Aorta (tissue), 5 donors: ENCODE measurements at regions of chr5 and their contacts with region 1.

Region 1: DNA sequence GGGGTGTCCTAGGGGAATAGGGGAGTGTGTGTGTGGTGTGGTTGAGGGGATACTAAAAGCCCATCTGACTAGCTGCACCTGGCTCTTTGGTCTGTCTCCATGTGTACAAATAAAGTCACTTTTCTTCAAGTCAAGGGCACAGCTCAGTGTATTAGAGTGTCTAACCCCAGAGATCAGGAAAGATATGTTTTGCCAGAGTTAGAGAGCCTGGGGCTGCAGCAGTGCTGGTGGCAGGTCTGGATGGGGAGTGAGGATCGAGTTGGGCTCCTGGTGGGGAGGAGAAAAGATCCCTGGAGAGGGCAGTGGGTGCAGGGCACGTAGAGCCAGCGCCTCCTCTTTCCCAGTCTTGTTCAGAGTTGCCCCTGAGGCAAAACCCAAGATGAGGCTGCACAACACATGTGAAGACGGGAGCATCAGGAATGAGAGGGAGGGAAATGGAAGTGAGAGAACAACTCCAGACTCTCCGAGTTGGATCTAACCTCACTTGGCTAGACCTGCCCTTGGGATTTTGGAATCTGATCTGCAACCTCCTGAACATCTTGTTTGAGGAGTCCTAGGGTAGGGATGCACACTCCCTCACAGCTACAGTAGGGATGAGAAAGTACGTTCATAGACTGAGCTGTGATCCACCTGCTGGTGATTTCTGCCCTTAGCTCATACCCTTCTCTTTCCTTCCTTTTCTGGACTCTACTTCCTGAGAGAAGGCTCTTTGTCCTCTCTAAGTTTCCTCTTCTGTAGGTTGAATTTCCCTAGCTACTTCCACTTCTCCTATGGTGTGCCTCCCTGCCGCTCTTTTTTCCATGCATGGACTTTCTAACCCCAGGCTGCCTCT is 309.9 kb downstream of the ZSWIM6 start:
- DNase-seq: no peak
- ATAC-seq: no peak
- H3K4me3 ChIP-seq: no peak overlapping the region
- H3K27ac ChIP-seq: no peak overlapping the region
- H3K4me1 ChIP-seq: no peaks in the 10 kb centered on the region
- H3K27me3 ChIP-seq: no peaks in the 10 kb centered on the region

Region 2: GRCh38 chr5:61277190-61277589 is 364.8 kb before region 1 on chr5:
- intact Hi-C with region 1: loop called in 1 of 2 experiments (anchors 5 kb)
- DNase-seq: no peak
- ATAC-seq: peak; percentile 66
- H3K4me3 ChIP-seq: no peak overlapping the region
- H3K27ac ChIP-seq: no peak overlapping the region
- H3K4me1 ChIP-seq: no peaks in the 10 kb centered on the region
- H3K27me3 ChIP-seq: no peaks in the 10 kb centered on the region